ENCODE measurements at regions of chr7 and their contacts with region 1.

Region 1: GRCh38 chr7:2785071-2785500 is 59.0 kb downstream of the GNA12 start:
- DNase-seq: no peak
- ATAC-seq: peak; percentile 91
- H3K4me3 Mint-ChIP-seq: peak overlapping the region; percentile 56
- H3K27ac Mint-ChIP-seq: peak overlapping the region; percentile 71
- H3K4me1 Mint-ChIP-seq: peaks cover 39% of the 10 kb centered on the region
- H3K27me3 Mint-ChIP-seq: no peaks in the 10 kb centered on the region
- CTCF ChIP-seq: no peak

Region 2: DNA sequence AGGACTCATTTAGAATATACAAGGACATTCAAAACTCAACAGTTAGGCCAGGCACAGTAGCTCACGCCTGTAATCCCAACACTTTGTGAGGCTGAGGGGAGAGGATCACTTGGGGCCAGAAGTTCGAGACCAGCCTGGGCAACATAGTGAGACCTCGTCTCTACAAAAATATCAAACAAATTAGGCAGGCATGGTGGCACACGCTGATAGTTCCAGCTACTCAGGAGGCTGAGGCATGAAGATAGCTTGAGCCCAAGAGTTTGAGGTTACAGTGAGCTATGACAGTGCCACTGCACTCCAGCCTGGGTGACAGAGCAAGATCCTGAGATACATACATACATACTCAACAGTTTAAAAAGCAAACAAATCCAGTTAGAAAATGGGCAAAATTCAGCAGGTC is 14.2 kb after region 1 on chr7:
- CTCF ChIA-PET with region 1: no interaction called
- POLR2A ChIA-PET with region 1: interaction called, 7 read pairs
- intact Hi-C with region 1: loop called (anchors 2 kb)
- DNase-seq: no peak
- ATAC-seq: no peak
- H3K4me3 Mint-ChIP-seq: no peak overlapping the region
- H3K27ac Mint-ChIP-seq: peak overlapping the region; percentile 32
- H3K4me1 Mint-ChIP-seq: peaks cover 70% of the 10 kb centered on the region
- H3K27me3 Mint-ChIP-seq: no peaks in the 10 kb centered on the region
- CTCF ChIP-seq: no peak

Region 3: DNA sequence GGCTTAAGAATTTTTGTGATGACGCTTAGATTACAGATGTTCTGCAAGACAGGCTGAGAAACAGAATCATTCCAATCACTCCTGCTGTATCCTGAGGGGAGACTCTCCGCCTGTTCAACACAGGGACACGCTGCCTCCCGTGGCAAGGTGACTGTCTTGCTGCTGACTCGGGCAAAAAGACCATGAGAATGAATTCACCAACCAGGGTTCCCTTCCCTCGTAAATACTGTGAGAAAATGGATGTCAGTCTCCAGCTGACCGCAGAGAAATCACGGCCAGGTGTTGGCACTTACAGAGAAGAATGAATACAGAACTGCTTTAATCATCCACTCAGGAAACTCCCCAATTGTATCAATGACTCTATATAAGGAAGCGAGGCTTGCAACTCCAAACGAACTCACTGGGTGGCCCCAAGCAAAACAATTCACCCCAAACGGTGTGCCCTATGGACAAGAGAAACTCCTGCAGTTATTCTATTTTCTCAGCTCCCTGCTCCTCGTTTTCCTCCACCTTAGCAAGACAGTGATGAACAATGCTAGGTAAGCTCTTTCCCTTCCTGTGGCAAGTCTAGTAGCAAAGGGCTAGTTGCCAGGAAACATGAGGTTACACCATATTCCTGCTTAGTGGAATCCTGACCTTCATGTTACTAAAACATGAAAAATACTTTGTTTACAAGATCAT is 36.2 kb after region 1 on chr7:
- CTCF ChIA-PET with region 1: no interaction called
- POLR2A ChIA-PET with region 1: no interaction called
- intact Hi-C with region 1: loop called (anchors 5 kb)
- DNase-seq: no peak
- ATAC-seq: peak; percentile 67
- H3K4me3 Mint-ChIP-seq: peak overlapping the region; percentile 74
- H3K27ac Mint-ChIP-seq: peak overlapping the region; percentile 85
- H3K4me1 Mint-ChIP-seq: peaks cover 67% of the 10 kb centered on the region
- H3K27me3 Mint-ChIP-seq: no peaks in the 10 kb centered on the region
- CTCF ChIP-seq: no peak

Measured in activated B cell treated with CpG ODN at 0.5 μM for 24 hours (primary cell).